ENCODE measurements at regions of chr20 and their contacts with region 1.

Region 1: GRCh38 chr20:2172305-2173175 is 70.9 kb downstream of the STK35 start:
- DNase-seq: peak; percentile 67 to 72 (median 69)
- ATAC-seq: peak; percentile 84 to 93 (median 92)
- H3K4me3 ChIP-seq: no peak overlapping the region
- H3K27ac ChIP-seq: no peak overlapping the region
- H3K4me1 ChIP-seq: no peaks in the 10 kb centered on the region
- H3K27me3 ChIP-seq: no peaks in the 10 kb centered on the region
- CTCF ChIP-seq: peak; percentile 80 to 90 (median 86)
- POLR2A ChIP-seq: no peak

Region 2: DNA sequence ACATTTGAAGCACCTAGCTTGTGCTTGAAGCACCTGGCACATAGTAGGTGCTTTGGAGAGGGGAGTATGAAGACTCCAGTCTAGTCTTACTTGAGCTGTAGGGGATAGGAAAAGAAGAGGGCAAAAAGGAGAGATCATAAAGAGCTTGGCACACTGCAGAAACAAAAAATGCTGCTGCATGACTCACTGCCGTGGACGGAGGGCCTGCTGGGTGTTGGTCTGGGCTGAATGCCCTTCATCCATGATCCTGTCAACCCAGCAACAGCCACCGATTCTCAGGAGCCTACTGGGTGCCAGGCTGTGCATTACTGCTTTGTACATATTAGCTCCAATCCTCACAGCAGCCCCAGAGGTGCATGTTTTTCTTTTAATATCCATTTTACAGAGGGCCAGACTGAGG is 184.7 kb before region 1 on chr20:
- intact Hi-C with region 1: loop called in 1 of 2 experiments (anchors 10 kb)
- DNase-seq: no peak
- ATAC-seq: no peak
- H3K4me3 ChIP-seq: no peak overlapping the region
- H3K27ac ChIP-seq: no peak overlapping the region
- H3K4me1 ChIP-seq: no peaks in the 10 kb centered on the region
- H3K27me3 ChIP-seq: no peaks in the 10 kb centered on the region
- CTCF ChIP-seq: no peak
- POLR2A ChIP-seq: no peak